Motor neuron (in vitro differentiated cells): ENCODE measurements at regions of chr13 and their contacts with region 1.

Region 1: GRCh38 chr13:81540777-81541176 is 1199.9 kb upstream of the SPRY2 start:
- ATAC-seq: peak in 1 of 8 experiments; percentile 23
- H3K4me3 ChIP-seq: no peak overlapping the region
- H3K27ac ChIP-seq: no peak overlapping the region
- H3K4me1 ChIP-seq: no peaks in the 10 kb centered on the region

Region 2: GRCh38 chr13:81442904-81443303 is 97.9 kb before region 1 on chr13:
- in situ Hi-C with region 1: no loop called
- ATAC-seq: no peak
- H3K4me3 ChIP-seq: no peak overlapping the region
- H3K27ac ChIP-seq: no peak overlapping the region
- H3K4me1 ChIP-seq: no peaks in the 10 kb centered on the region

Region 3: DNA sequence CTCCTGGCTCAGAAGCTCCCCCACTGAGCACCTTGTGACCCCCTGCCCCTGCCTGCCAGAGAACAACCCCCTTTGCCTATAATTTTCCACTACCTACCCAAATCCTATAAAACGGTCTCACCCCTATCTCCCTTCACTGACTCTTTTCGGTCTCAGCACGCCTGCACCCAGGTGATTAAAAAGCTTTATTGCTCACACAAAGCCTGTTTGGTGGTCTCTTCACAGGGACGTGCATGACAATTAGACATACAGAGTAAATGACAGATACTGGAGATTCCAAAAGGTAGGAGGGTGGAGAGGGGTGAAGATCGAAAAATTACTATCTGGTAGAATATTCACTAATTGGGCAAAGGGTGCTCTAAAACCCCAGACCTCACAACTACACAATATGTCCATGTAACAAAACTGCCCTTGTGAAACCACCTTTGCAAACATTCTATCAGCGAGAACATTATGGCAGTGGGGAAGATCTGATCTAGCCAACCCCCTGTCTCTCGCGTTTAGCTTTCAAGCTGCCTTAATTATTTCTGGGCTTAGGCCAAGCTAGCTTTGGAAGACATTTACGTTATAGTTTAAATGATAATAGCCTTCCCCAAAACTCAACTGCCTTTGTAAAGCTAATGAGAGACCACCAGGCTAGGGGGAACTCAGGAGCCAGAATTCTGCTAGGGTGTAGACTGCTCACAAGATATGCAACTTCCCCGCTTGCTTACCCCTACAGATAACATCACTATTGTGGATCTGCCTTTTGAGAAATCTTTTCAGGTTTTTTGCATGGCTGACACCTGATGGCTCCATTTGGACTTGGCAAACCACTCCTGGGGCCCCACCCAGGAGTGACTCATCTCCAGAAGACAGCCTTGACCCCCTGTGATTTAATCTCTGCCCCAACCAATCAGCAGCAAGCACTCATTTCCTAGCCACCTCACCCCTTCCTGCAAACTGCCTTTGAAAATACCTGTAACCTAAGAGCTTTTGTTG is 334.2 kb after region 1 on chr13:
- in situ Hi-C with region 1: loop called in 1 of 9 experiments (anchors 25 kb)
- ATAC-seq: no peak
- H3K4me3 ChIP-seq: no peak overlapping the region
- H3K27ac ChIP-seq: no peak overlapping the region
- H3K4me1 ChIP-seq: no peaks in the 10 kb centered on the region